Heart right ventricle (tissue), 16 donors: ENCODE measurements at regions of chrX and their contacts with region 1.

Region 1: DNA sequence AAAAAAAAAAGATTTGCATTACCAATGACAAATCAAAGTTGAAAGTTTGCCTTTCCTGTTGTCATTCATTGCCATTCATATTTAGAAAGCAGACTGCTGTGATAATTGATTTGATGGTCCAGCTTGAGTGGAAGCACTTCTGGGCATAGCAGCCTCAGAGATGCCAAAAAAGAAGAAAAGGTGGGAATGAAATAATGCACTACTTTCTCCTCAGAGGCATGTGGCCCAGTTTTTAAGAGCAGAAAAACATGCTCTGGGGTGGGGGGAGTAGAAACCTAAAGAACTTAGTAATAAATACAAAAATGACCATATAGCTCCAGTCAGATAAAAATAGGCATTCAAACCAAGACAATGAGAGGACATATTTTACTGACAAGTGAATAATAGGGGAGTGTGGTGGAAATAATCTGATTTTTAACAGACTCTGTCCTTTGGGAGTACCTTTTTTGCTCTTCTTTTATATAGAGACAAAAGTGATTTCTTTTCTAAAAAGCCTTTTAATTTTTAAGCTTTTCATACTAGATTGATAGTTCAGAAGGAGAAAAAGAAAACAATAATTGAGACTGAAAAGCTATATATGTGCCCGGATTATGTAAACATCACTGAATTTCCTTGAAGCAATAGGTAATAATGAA is 599.1 kb downstream of the RPA4 start:
- DNase-seq: no peak
- ATAC-seq: no peak
- H3K4me3 ChIP-seq: no peak overlapping the region
- H3K27ac ChIP-seq: no peak overlapping the region
- H3K4me1 ChIP-seq: no peaks in the 10 kb centered on the region
- H3K27me3 ChIP-seq: no peaks in the 10 kb centered on the region
- CTCF ChIP-seq: no peak

Region 2: GRCh38 chrX:95919605-95920004 is 1563.2 kb before region 1 on chrX:
- intact Hi-C with region 1: loop called in 1 of 10 experiments (anchors 10 kb)
- DNase-seq: no peak
- ATAC-seq: no peak
- H3K4me3 ChIP-seq: no peak overlapping the region
- H3K27ac ChIP-seq: no peak overlapping the region
- H3K4me1 ChIP-seq: no peaks in the 10 kb centered on the region
- H3K27me3 ChIP-seq: peaks cover 0 to 3% (median 0%) of the 10 kb centered on the region in 7 donors
- CTCF ChIP-seq: no peak